ENCODE measurements at regions of chr9 and their contacts with region 1.

Region 1: GRCh38 chr9:129495534-129496325 is 125.2 kb downstream of the C9orf50 start:
- DNase-seq: peak; percentile 77 to 84 (median 78)
- H3K4me3 ChIP-seq: peak overlapping the region; percentile 51 to 84
- H3K4me3 Mint-ChIP-seq: peak overlapping the region; percentile 81 to 92 (median 86)
- H3K27ac ChIP-seq: peak overlapping the region; percentile 63
- H3K27ac Mint-ChIP-seq: peak overlapping the region; percentile 75 to 94 (median 91)
- H3K4me1 ChIP-seq: peaks cover 35% of the 10 kb centered on the region
- H3K4me1 Mint-ChIP-seq: peaks cover 18 to 49% (median 32%) of the 10 kb centered on the region in 4 donors
- H3K27me3 ChIP-seq: no peaks in the 10 kb centered on the region
- H3K27me3 Mint-ChIP-seq: no peaks in the 10 kb centered on the region

Region 2: DNA sequence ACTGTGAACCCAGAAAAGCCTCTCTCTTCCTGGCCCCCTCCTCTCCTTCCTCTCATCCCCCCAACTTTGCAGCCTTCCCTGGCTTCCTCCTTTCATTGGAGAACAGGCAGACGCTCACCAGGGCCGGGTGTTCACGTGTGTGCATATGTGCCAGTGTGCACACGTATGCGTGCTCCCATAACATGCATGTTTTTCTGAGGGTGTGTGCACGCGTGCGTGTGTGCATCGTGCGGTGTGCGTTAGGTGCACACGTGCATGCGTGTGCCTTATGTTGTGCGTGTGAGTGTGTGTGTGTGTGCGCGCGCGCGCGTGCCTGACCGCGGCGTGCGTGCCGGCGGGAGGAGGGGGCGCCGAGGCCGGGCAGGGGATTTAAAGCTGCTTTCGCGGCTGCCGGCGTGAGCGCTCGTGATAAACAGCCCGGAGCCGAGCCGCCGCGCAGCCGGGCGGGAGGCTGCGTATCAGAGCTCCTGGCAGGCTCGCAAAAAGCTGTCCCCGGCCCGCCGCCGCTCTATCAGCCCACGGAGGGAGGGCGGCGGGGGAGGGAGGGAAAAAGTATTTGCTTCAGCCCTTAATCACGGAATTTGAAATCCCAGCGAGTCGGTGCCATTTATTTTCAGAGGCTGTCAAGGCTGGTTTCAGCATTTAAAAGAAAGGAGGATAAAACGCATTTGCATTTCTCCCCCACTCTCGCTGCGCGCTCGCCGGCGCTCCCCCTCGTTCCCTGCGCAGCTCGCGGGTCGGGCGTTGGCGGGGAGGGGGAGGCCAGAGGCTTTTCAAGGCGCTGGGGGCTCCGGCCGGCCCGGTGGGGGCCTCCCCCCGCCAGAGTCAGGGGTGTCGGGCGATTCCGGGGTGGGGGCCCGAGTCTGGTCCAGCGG is 58.7 kb before region 1 on chr9:
- CTCF ChIA-PET with region 1: interaction called, 3 read pairs
- POLR2A ChIA-PET with region 1: interaction called, 19 read pairs
- intact Hi-C with region 1: no loop called
- DNase-seq: peak in 4 of 5 donors; percentile 45 to 49 (median 48)
- H3K4me3 ChIP-seq: peak overlapping the region in 1 of 2 donors; percentile 45
- H3K4me3 Mint-ChIP-seq: peak overlapping the region; percentile 85 to 96 (median 89)
- H3K27ac ChIP-seq: no peak overlapping the region
- H3K27ac Mint-ChIP-seq: peak overlapping the region in 6 of 7 donors; percentile 5 to 87 (median 82)
- H3K4me1 ChIP-seq: peaks cover 20% of the 10 kb centered on the region
- H3K4me1 Mint-ChIP-seq: peaks cover 12 to 43% (median 22%) of the 10 kb centered on the region in 4 donors
- H3K27me3 ChIP-seq: peaks cover 19% of the 10 kb centered on the region
- H3K27me3 Mint-ChIP-seq: peaks cover 32 to 36% of the 10 kb centered on the region in 2 donors

Region 3: DNA sequence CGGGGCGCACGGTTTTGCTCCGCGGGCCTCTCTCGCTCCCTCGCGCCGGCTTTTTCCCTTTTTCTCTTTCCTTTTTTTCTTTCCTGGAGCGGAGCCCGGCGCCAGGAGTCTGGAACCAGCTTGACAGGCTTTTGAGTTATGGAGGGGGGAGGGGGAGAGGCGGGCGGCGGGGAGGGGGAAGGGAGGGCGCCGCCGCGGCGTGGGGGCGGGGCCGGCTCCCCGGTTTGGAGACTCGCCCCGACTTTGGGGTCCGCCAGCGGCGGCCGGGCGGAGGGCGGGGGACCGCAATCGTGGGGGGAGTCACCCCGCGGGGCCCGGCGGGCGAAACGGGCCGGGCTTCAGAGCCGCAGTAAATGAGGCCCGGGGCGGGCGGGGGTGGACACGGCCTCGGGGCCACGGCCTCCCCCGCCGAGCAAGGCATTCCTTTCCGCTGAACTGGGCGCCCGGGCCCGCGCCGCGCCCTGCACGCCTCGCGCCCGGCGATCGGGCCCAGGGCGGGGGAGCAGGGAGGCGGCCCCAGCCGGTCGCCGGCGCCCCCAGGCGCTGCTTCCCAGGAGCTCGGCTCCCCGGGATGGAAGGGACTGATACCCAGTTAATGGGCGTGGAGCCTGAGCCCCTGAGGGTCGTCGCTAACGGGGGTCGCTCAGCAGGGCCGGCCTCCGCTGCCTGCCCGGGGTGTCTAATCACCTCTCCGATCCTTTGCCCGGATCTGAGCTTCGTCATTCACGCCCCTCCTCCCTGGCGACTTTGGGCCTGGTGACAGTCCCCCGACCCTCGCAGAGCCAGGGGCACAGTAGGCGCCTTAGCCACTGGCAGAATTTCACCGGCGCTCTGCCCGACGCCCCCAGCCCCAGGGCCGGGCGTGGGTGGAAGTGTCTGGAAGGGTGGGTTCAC is 13.0 kb before region 1 on chr9:
- CTCF ChIA-PET with region 1: no interaction called
- POLR2A ChIA-PET with region 1: interaction called, 44 read pairs
- intact Hi-C with region 1: no loop called
- DNase-seq: peak in 1 of 5 donors; percentile 38
- H3K4me3 ChIP-seq: peak overlapping the region in 1 of 2 donors; percentile 15
- H3K4me3 Mint-ChIP-seq: peak overlapping the region; percentile 55 to 81 (median 69)
- H3K27ac ChIP-seq: peak overlapping the region; percentile 62
- H3K27ac Mint-ChIP-seq: peak overlapping the region; percentile 57 to 93 (median 70)
- H3K4me1 ChIP-seq: peaks cover 31% of the 10 kb centered on the region
- H3K4me1 Mint-ChIP-seq: peaks cover 11 to 50% (median 25%) of the 10 kb centered on the region in 4 donors
- H3K27me3 ChIP-seq: no peaks in the 10 kb centered on the region
- H3K27me3 Mint-ChIP-seq: peaks cover 0 to 2% of the 10 kb centered on the region in 2 donors

Region 4: GRCh38 chr9:129785866-129786265 is 290.1 kb after region 1 on chr9:
- CTCF ChIA-PET with region 1: no interaction called
- POLR2A ChIA-PET with region 1: no interaction called
- intact Hi-C with region 1: no loop called
- DNase-seq: no peak
- H3K4me3 ChIP-seq: no peak overlapping the region
- H3K4me3 Mint-ChIP-seq: no peak overlapping the region
- H3K27ac ChIP-seq: no peak overlapping the region
- H3K27ac Mint-ChIP-seq: no peak overlapping the region
- H3K4me1 ChIP-seq: peaks cover 3% of the 10 kb centered on the region
- H3K4me1 Mint-ChIP-seq: peaks cover 6 to 14% (median 9%) of the 10 kb centered on the region in 4 donors
- H3K27me3 ChIP-seq: no peaks in the 10 kb centered on the region
- H3K27me3 Mint-ChIP-seq: peaks cover 8 to 10% of the 10 kb centered on the region in 2 donors

Measured in CD4-positive, alpha-beta memory T cell (primary cell).